CD8-positive, alpha-beta T cell (primary cell): ENCODE measurements at regions of chr1 and their contacts with region 1.

Region 1: DNA sequence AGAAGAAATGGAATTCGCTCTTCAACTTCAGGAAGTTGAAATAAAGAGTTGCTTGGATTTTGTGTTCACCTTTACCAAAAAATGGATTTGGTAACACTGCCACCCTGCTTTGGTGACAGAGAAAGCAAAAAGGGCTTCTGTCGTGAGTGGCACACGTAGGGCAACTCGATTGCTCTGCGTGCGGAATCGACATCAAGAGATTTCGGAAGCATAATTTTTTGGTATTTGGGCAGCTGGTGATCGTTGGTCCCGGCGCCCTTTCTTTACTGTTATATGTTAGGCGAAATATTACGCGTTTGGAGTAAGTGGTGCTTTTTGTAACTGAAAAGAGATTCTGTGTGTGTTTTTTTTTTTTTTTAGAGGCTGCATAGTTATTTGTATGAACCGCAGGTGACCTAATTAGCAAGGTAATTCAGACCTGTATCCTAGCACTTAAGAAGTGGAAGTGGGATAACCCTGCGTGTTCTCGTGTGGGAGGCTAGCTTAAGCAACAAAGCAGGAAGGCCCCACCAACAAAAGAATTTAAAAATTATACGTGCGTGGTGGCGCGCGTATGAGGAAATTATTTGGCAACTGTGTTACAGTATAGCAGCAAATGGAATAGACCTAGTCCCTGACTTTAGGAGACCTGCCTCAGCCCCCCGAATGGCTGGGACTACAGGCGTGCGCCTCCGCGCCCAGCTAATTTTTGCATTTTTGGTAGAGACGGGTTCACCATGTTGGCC is at the start of gene RNU11:
- DNase-seq: peak; percentile 76 to 97 (median 87)
- ATAC-seq: peak; percentile 65
- H3K4me3 ChIP-seq: peak within 1 kb of the TSS; percentile 41 to 65
- H3K4me3 Mint-ChIP-seq: peak within 1 kb of the TSS; percentile 80
- H3K27ac ChIP-seq: peak within 1 kb of the TSS; percentile 96 to 98
- H3K27ac Mint-ChIP-seq: peak within 1 kb of the TSS; percentile 99
- H3K4me1 ChIP-seq: peaks cover 30% of the 10 kb centered on the region
- H3K4me1 Mint-ChIP-seq: peaks cover 32% of the 10 kb centered on the region
- H3K27me3 ChIP-seq: no peaks in the 10 kb centered on the region
- H3K27me3 Mint-ChIP-seq: no peaks in the 10 kb centered on the region
- CTCF ChIP-seq: no peak
- total RNA-seq, gene RNU11: not detected

Region 2: GRCh38 chr1:28668191-28668955 is 19.7 kb after region 1 on chr1 and contains the start of gene GMEB1:
- CTCF ChIA-PET with region 1: interaction called, 23 read pairs
- POLR2A ChIA-PET with region 1: interaction called, 76 read pairs
- intact Hi-C with region 1: loop called (anchors 1 kb)
- DNase-seq: peak; percentile 66 to 91 (median 82)
- ATAC-seq: peak; percentile 61
- H3K4me3 ChIP-seq: peak within 1 kb of the TSS; percentile 83 to 98
- H3K4me3 Mint-ChIP-seq: peak within 1 kb of the TSS; percentile 92
- H3K27ac ChIP-seq: peak within 1 kb of the TSS; percentile 81 to 98
- H3K27ac Mint-ChIP-seq: peak within 1 kb of the TSS; percentile 97
- H3K4me1 ChIP-seq: peaks cover 9% of the 10 kb centered on the region
- H3K4me1 Mint-ChIP-seq: peaks cover 22% of the 10 kb centered on the region
- H3K27me3 ChIP-seq: no peaks in the 10 kb centered on the region
- H3K27me3 Mint-ChIP-seq: no peaks in the 10 kb centered on the region
- CTCF ChIP-seq: no peak
- total RNA-seq, gene GMEB1: 12.9 to 13.6 TPM

Region 3: DNA sequence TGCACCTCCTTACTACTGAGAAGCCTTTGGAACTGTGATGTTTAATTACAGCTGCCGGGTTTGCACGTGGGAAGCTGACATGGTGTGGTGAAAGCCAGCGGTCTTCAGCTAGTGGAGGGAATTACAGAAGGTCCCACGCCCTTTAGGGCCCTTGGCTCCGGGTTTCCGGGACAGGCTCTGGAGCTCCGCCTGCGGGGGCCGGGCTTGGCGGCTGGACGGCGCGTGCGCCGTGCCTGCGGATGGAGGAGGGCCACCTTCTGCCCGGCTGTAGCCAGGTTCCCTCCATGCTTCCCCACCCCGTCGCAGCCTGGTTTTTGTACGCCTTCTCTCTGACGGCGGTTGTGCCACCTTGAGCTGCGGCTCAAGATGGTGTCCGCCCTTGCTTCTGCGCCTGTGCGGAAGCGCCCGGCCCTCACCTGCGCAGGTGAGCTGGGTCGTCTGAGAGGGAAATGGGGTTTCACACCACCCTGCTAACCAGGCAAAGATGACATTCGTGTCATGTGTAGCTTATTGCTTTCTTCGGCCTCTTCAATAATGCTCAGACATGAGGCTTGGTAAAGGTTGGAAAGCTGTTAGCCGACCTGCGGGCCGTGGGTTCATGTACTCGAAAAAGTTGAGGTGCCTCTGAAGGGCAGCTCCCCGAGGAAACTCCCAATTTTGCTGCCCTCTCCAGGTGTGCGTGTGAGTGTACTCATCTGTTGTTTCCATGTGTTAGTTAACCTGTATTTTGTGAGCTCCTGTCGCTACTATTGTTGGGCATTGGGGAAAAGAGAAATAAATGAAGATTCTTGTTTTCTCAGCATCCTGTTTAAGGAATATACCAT is 126.7 kb after region 1 on chr1:
- CTCF ChIA-PET with region 1: interaction called, 4 read pairs
- POLR2A ChIA-PET with region 1: interaction called, 16 read pairs
- intact Hi-C with region 1: loop called in 1 of 2 experiments (anchors 1 kb)
- DNase-seq: peak; percentile 47 to 86 (median 69)
- ATAC-seq: peak; percentile 92
- H3K4me3 ChIP-seq: peak overlapping the region; percentile 48 to 56
- H3K4me3 Mint-ChIP-seq: peak overlapping the region; percentile 82
- H3K27ac ChIP-seq: peak overlapping the region; percentile 54 to 58
- H3K27ac Mint-ChIP-seq: peak overlapping the region; percentile 91
- H3K4me1 ChIP-seq: peaks cover 13% of the 10 kb centered on the region
- H3K4me1 Mint-ChIP-seq: peaks cover 12% of the 10 kb centered on the region
- H3K27me3 ChIP-seq: no peaks in the 10 kb centered on the region
- H3K27me3 Mint-ChIP-seq: no peaks in the 10 kb centered on the region
- CTCF ChIP-seq: no peak

Region 4: DNA sequence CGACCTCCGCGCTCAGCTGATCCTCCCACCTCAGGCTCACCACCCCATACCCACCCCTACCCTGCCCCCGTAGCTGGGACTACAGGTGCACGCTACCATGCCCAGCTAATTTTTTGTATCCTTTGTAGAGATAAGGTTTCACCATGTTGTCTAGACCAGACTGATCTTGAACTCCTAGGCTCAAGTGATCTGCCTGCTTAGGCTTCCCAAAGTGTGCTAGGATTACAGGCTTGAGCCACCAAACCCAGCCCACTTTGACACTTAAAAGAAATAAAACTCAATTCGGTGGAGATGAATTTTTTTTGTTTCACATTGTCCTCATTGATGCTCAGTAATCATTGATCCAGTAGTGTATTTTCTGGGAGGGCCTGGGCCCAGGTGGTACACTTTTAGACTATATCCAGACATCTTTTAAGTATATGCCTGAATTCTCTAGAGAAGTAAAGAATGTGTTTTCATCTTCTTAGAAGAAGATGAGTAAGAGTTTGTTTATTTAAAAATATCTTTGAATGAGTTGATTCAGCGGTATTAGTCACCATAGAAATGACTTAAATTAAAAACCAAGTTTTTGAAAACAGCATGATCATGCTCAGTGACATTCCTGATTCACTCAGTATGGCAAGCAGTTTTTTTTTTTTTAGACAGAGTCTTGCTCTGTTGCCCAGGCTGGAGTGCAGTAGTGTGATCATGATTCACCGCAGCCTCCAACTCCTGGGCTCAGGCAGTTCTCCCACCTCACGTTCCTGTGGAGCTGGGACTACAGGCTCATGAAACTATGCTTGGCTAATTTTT is 323.5 kb after region 1 on chr1:
- CTCF ChIA-PET with region 1: no interaction called
- POLR2A ChIA-PET with region 1: no interaction called
- intact Hi-C with region 1: no loop called
- DNase-seq: no peak
- ATAC-seq: no peak
- H3K4me3 ChIP-seq: no peak overlapping the region
- H3K4me3 Mint-ChIP-seq: no peak overlapping the region
- H3K27ac ChIP-seq: no peak overlapping the region
- H3K27ac Mint-ChIP-seq: peak overlapping the region; percentile 80
- H3K4me1 ChIP-seq: peaks cover 20% of the 10 kb centered on the region
- H3K4me1 Mint-ChIP-seq: peaks cover 68% of the 10 kb centered on the region
- H3K27me3 ChIP-seq: no peaks in the 10 kb centered on the region
- H3K27me3 Mint-ChIP-seq: no peaks in the 10 kb centered on the region
- CTCF ChIP-seq: no peak